Activated CD8-positive, alpha-beta T cell treated with anti-CD3 and anti-CD28 coated beads for 36 hours (primary cell): ENCODE measurements at regions of chr14 and their contacts with region 1.

Region 1: GRCh38 chr14:100108042-100108825 is 43.0 kb downstream of the EVL start:
- DNase-seq: peak; percentile 95
- ATAC-seq: peak; percentile 58
- H3K4me3 Mint-ChIP-seq: peak overlapping the region; percentile 16
- H3K27ac Mint-ChIP-seq: peak overlapping the region; percentile 96
- H3K4me1 Mint-ChIP-seq: peaks cover 82% of the 10 kb centered on the region
- H3K27me3 Mint-ChIP-seq: no peaks in the 10 kb centered on the region
- CTCF ChIP-seq: peak; percentile 87

Region 2: GRCh38 chr14:99982537-99983250 is 125.5 kb before region 1 on chr14:
- CTCF ChIA-PET with region 1: interaction called, 63 read pairs
- POLR2A ChIA-PET with region 1: interaction called, 5 read pairs
- intact Hi-C with region 1: loop called (anchors 2 kb)
- DNase-seq: peak; percentile 68
- ATAC-seq: peak; percentile 100
- H3K4me3 Mint-ChIP-seq: no peak overlapping the region
- H3K27ac Mint-ChIP-seq: no peak overlapping the region
- H3K4me1 Mint-ChIP-seq: peaks cover 16% of the 10 kb centered on the region
- H3K27me3 Mint-ChIP-seq: no peaks in the 10 kb centered on the region
- CTCF ChIP-seq: peak; percentile 96

Region 3: DNA sequence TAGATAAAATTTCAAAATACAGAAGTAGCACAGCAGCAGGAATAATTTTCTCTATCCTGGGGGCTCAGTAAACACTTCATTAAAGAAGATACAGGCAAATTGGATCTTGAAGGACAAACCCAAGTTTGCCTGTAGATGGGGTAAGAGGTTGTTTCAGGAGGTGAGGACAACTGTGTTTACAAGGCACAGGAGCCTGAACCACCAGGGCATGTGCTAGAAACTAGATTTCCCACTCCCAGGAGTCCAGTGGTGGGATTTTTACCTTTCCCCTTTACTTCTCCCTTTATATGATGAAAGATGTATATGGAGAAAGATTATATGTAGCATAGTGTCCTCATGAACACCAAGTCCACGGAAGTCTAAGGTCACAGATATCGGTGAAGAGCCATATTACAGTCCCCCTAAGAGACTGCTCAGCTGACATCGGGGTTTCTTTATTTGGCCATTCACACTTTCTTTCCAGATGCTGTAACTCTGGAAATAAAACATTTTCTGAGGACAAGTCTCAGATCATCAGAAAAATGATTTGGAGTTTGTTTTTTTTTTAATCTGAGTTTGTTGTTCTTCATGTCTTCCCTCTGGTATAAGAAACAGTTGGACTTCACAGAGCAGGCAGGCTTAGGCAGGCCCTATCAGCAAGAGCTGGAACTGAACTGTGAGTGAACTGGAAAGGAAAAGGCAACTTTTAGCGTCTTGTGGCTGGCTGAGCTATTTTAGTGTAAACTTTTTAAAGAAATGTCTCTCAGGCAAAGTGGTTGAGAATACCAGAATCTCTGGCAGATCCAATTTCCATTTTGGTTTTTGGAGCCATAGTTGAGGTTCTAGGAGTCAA is 51.1 kb before region 1 on chr14:
- CTCF ChIA-PET with region 1: interaction called, 913 read pairs
- POLR2A ChIA-PET with region 1: interaction called, 6 read pairs
- intact Hi-C with region 1: no loop called
- DNase-seq: peak; percentile 31
- ATAC-seq: peak; percentile 35
- H3K4me3 Mint-ChIP-seq: peak overlapping the region; percentile 43
- H3K27ac Mint-ChIP-seq: peak overlapping the region; percentile 87
- H3K4me1 Mint-ChIP-seq: peaks cover 61% of the 10 kb centered on the region
- H3K27me3 Mint-ChIP-seq: no peaks in the 10 kb centered on the region
- CTCF ChIP-seq: peak; percentile 65

Region 4: GRCh38 chr14:100078991-100079725 is 29.1 kb before region 1 on chr14:
- CTCF ChIA-PET with region 1: interaction called, 913 read pairs
- POLR2A ChIA-PET with region 1: interaction called, 840 read pairs
- intact Hi-C with region 1: loop called (anchors 2 kb)
- DNase-seq: peak; percentile 93
- ATAC-seq: peak; percentile 70
- H3K4me3 Mint-ChIP-seq: peak overlapping the region; percentile 72
- H3K27ac Mint-ChIP-seq: peak overlapping the region; percentile 99
- H3K4me1 Mint-ChIP-seq: peaks cover 95% of the 10 kb centered on the region
- H3K27me3 Mint-ChIP-seq: no peaks in the 10 kb centered on the region
- CTCF ChIP-seq: peak; percentile 27

Region 5: GRCh38 chr14:100122481-100123222 is 14.4 kb after region 1 on chr14:
- CTCF ChIA-PET with region 1: interaction called, 38 read pairs
- POLR2A ChIA-PET with region 1: interaction called, 8 read pairs
- intact Hi-C with region 1: no loop called
- DNase-seq: no peak
- ATAC-seq: no peak
- H3K4me3 Mint-ChIP-seq: no peak overlapping the region
- H3K27ac Mint-ChIP-seq: peak overlapping the region; percentile 30
- H3K4me1 Mint-ChIP-seq: peaks cover 20% of the 10 kb centered on the region
- H3K27me3 Mint-ChIP-seq: no peaks in the 10 kb centered on the region
- CTCF ChIP-seq: no peak

Region 6: GRCh38 chr14:100170880-100171279 is 62.6 kb after region 1 on chr14:
- CTCF ChIA-PET with region 1: no interaction called
- POLR2A ChIA-PET with region 1: no interaction called
- intact Hi-C with region 1: no loop called
- DNase-seq: no peak
- ATAC-seq: no peak
- H3K4me3 Mint-ChIP-seq: no peak overlapping the region
- H3K27ac Mint-ChIP-seq: no peak overlapping the region
- H3K4me1 Mint-ChIP-seq: peaks cover 10% of the 10 kb centered on the region
- H3K27me3 Mint-ChIP-seq: peaks cover 3% of the 10 kb centered on the region
- CTCF ChIP-seq: no peak

Region 7: DNA sequence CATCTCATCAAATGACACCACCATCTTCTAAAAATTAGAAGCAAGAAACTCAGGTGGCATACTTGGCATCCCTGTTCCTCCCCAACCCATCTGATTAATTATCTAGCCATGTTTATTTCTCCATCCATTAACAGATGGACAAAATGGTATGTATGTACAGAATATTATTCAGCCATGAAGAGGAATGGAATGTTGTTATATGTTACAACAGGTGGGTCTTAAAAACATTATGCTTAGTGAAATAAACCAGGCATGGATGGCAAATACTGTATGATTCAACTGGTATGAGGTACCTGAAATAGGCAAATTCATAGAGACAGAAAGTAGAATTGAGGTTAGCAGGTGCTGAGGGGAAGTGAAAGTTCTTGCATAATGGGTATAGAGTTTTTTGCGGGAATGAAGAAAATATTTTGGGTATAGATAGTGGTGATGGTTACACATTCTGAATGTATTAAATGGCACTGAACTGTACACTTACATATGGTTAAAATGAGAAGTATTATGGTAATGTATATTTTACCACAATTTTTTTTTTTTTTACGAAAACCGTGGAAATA is 148.2 kb after region 1 on chr14:
- CTCF ChIA-PET with region 1: no interaction called
- POLR2A ChIA-PET with region 1: no interaction called
- intact Hi-C with region 1: no loop called
- DNase-seq: no peak
- ATAC-seq: peak; percentile 26
- H3K4me3 Mint-ChIP-seq: no peak overlapping the region
- H3K27ac Mint-ChIP-seq: peak overlapping the region; percentile 16
- H3K4me1 Mint-ChIP-seq: peaks cover 83% of the 10 kb centered on the region
- H3K27me3 Mint-ChIP-seq: no peaks in the 10 kb centered on the region
- CTCF ChIP-seq: no peak